ENCODE measurements at regions of chrX and their contacts with region 1.

Region 1: DNA sequence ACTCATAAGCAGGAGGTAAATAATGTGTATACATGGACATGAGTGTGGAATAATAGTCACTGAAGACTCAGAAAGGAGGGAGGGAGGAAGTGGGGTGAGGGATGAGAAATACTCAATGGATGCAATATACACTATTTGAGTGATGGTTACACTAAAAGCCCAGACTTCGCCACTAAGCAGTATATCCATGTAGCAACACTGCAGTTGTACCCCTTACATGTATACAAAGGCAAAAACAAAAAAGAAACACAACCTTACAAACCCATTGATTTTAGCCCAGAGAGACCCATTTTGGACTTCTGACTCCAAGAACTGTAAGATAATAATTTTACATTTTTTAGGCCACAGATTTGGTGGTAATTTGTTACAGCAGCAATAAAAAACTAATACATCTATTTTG is 51.5 kb downstream of the VMA21 start:
- DNase-seq: no peak
- ATAC-seq: no peak

Region 2: DNA sequence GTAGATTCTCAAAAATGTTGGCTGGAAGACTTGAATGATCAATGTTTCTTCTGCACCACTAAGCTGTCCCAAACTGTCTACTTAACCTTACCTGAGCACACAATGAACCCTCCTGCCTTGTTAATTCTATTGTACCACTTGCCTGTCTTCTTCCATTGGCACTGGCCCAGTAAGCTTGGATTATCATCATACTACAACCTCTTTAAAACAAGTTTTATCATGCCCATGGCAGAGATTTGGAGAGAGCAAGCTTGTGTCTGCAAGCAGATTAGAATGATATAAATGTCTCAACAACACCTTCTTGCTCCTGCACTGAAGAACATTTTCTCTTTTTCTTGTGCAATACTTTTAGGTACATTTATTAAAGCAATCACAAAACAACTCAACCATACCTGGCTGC is 125.5 kb before region 1 on chrX:
- intact Hi-C with region 1: no loop called
- DNase-seq: no peak
- ATAC-seq: no peak

Region 3: GRCh38 chrX:151488677-151489076 is 40.2 kb after region 1 on chrX:
- intact Hi-C with region 1: loop called (anchors 2 kb)
- DNase-seq: no peak
- ATAC-seq: no peak